Calu3 (cell line): ENCODE measurements at regions of chr17 and their contacts with region 1.

Region 1: DNA sequence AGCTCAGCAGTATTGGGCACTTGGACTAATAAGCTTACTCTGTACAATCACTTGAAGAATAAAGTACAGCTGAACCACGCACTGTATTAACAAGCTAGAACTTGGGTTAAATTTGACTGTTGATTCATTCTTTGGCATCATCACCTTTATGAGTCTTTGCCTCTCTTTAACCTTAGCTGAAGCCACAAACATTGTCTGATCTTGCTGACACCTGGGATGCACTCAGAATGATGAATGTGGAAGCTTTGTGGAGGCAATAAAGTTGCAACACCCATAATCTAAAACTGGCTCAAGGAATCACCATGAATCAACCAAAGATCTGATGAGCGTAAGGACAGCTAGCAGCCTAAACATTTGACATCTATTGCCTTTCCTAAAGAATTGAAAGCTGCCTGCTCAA is 590.6 kb upstream of the SOX9 start:
- DNase-seq: no peak
- H3K4me3 Mint-ChIP-seq: no peak overlapping the region
- H3K27ac Mint-ChIP-seq: no peak overlapping the region
- H3K4me1 Mint-ChIP-seq: no peaks in the 10 kb centered on the region
- H3K27me3 Mint-ChIP-seq: no peaks in the 10 kb centered on the region
- CTCF ChIP-seq: no peak

Region 2: GRCh38 chr17:71580220-71580619 is 50.0 kb after region 1 on chr17:
- CTCF ChIA-PET with region 1: interaction called, 10 read pairs
- intact Hi-C with region 1: no loop called
- DNase-seq: no peak
- H3K4me3 Mint-ChIP-seq: no peak overlapping the region
- H3K27ac Mint-ChIP-seq: no peak overlapping the region
- H3K4me1 Mint-ChIP-seq: no peaks in the 10 kb centered on the region
- H3K27me3 Mint-ChIP-seq: no peaks in the 10 kb centered on the region
- CTCF ChIP-seq: no peak